ENCODE measurements at regions of chr1 and their contacts with region 1.

Region 1: DNA sequence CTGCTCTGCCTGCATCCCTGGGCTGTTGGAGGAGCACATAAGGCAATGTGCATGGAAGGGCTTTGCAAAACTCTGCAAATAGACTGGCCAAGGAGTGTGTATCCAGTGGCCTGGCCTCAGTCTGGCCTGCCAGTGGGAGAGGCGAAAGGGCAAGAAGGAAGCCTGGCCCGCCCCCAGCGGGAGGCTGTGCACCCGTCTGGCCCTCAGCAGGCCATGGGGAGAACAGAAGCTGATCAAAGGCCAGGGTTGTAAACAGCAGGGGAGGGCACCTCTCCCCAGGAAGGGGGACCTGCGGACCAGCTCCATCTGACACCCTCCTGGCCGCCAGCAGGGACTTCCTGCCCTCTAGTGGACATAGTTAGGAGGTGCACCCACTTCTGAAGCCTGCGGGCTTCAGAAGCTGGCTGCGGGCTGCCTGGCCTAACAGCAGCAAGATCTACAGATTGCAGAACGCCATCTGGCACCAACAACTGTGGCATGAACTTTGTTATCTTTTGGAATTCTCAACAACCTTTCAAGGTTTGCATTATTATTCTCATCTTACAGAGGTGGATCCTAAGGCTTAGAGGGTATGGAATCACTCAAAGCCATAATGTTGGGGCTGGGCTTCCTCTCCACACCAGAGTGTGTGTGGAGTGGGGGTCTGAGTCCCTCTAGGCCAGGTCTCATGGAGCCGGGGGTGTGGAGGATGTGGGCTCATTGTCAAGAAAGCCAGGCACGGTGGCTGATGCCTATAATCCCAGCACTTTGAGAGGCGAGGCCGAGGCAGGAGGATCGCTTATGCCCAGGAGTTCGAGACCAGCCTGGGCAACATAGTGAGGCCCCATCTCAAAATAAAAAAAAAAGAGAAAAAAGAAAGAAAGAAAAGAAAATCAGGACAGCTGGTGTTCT is 18.9 kb upstream of the CDK18 start:
- DNase-seq: peak; percentile 47
- ATAC-seq: peak; percentile 80
- H3K4me3 Mint-ChIP-seq: no peak overlapping the region
- H3K27ac Mint-ChIP-seq: no peak overlapping the region
- H3K4me1 Mint-ChIP-seq: peaks cover 29% of the 10 kb centered on the region
- H3K27me3 Mint-ChIP-seq: peaks cover 36% of the 10 kb centered on the region
- CTCF ChIP-seq: peak; percentile 73

Region 2: DNA sequence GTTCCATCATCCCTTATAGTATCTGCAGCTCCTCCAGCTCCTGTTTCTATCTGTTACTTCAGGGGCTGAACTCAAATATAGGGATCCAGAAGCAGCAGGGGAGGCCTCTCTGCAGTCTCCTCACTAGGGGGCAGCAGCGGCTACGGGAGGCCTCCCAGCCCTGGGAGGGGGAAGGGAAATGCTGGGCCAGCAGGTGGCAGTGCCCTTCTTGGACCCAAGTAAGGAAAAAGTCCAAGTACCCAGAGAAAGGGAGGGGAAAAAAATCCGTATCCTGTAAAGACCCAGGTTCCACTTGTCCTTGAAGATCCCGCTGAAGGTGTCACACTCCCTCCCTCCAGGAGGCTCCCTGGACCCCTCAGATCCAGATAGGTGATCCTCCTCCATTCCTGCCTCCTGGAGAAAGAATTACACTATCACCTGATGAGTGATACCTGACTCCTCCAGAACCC is 149.9 kb before region 1 on chr1:
- CTCF ChIA-PET with region 1: interaction called, 75 read pairs
- POLR2A ChIA-PET with region 1: no interaction called
- intact Hi-C with region 1: loop called (anchors 1 kb)
- DNase-seq: peak; percentile 70
- ATAC-seq: peak; percentile 84
- H3K4me3 Mint-ChIP-seq: no peak overlapping the region
- H3K27ac Mint-ChIP-seq: no peak overlapping the region
- H3K4me1 Mint-ChIP-seq: peaks cover 6% of the 10 kb centered on the region
- H3K27me3 Mint-ChIP-seq: no peaks in the 10 kb centered on the region
- CTCF ChIP-seq: peak; percentile 84

Region 3: DNA sequence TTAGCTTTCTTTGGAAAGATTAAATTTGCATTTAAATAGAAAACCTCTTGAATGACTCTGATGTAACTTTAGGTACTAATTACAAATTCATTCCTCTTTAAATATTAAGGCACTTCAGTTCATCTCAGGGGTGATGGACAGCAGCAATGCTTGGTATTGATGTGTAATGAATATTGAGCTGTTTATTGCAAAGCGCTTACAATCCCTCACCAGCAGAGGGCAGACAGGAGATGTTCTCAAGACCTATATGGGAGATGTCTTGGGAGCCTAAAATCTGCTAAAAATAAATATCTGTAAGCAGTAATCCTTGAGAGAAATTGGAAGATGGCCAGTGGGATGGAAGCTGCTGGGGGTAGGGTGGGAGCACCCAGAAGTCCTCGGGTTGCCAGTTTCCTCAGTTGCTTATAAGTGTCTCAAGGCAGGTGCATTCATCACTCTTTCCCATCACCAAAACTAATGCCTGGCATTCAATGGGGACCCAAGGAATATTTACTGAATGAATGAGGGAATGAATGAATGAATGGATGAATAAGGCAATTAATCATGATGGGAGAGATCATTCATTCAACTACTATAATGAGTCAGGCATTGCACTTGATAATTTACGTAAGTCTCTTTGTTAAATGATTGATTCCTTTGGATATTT is 131.2 kb before region 1 on chr1:
- CTCF ChIA-PET with region 1: interaction called, 114 read pairs
- POLR2A ChIA-PET with region 1: interaction called, 6 read pairs
- intact Hi-C with region 1: loop called (anchors 1 kb)
- DNase-seq: no peak
- ATAC-seq: peak; percentile 69
- H3K4me3 Mint-ChIP-seq: no peak overlapping the region
- H3K27ac Mint-ChIP-seq: no peak overlapping the region
- H3K4me1 Mint-ChIP-seq: peaks cover 28% of the 10 kb centered on the region
- H3K27me3 Mint-ChIP-seq: peaks cover 9% of the 10 kb centered on the region
- CTCF ChIP-seq: no peak

Region 4: GRCh38 chr1:205422993-205423625 is 62.5 kb before region 1 on chr1:
- CTCF ChIA-PET with region 1: interaction called, 11 read pairs
- POLR2A ChIA-PET with region 1: no interaction called
- intact Hi-C with region 1: no loop called
- DNase-seq: no peak
- ATAC-seq: no peak
- H3K4me3 Mint-ChIP-seq: no peak overlapping the region
- H3K27ac Mint-ChIP-seq: no peak overlapping the region
- H3K4me1 Mint-ChIP-seq: no peaks in the 10 kb centered on the region
- H3K27me3 Mint-ChIP-seq: peaks cover 18% of the 10 kb centered on the region
- CTCF ChIP-seq: no peak

Region 5: GRCh38 chr1:205440476-205441317 is 44.9 kb before region 1 on chr1:
- CTCF ChIA-PET with region 1: interaction called, 10 read pairs
- POLR2A ChIA-PET with region 1: interaction called, 4 read pairs
- intact Hi-C with region 1: no loop called
- DNase-seq: peak; percentile 41
- ATAC-seq: peak; percentile 84
- H3K4me3 Mint-ChIP-seq: peak overlapping the region; percentile 82
- H3K27ac Mint-ChIP-seq: peak overlapping the region; percentile 79
- H3K4me1 Mint-ChIP-seq: peaks cover 58% of the 10 kb centered on the region
- H3K27me3 Mint-ChIP-seq: no peaks in the 10 kb centered on the region
- CTCF ChIP-seq: no peak

Region 6: DNA sequence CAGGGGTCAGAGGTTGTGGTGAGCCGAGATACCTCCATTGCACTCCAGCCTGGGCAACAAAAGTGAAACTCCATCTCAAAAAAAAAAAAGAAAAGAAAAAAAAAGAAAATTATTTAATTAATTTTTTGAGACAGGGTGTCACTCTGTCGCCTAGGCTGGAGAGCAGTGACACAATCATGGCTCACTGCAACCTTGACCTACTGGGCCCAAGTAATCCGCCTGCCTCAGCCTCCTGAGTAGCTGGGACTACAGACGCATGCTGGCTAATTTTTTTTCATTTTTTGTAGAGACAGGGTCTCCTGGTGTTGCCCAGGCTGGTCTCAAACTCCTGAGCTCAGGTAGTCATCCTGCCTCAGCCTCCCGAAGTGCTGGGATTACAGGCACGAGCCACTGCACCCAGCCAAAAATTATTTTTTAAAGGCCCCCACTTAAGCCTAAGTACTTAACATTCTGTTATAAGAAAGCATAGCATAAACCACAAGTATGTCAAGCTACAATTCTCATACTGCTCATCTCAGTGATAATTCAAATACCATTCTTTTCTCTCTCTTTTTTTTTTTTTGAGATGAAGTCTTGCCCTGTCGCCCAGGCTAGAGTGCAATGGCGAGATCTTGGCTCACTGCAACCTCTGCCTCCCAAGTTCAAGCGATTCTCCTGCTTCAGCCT is 244.5 kb after region 1 on chr1:
- CTCF ChIA-PET with region 1: no interaction called
- POLR2A ChIA-PET with region 1: no interaction called
- intact Hi-C with region 1: no loop called
- DNase-seq: no peak
- ATAC-seq: no peak
- H3K4me3 Mint-ChIP-seq: no peak overlapping the region
- H3K27ac Mint-ChIP-seq: no peak overlapping the region
- H3K4me1 Mint-ChIP-seq: peaks cover 7% of the 10 kb centered on the region
- H3K27me3 Mint-ChIP-seq: no peaks in the 10 kb centered on the region
- CTCF ChIP-seq: no peak

Measured in activated B cell treated with CpG ODN at 0.5 μM for 24 hours (primary cell).